Common myeloid progenitor, CD34-positive (primary cell): ENCODE measurements at regions of chr11 and their contacts with region 1.

Region 1: GRCh38 chr11:727859-728748 is 19.2 kb upstream of the TALDO1 start:
- DNase-seq: peak; percentile 79 to 81 (median 79)
- H3K4me3 ChIP-seq: no peak overlapping the region
- H3K27ac ChIP-seq: no peak overlapping the region
- H3K4me1 ChIP-seq: peaks cover 0 to 30% (median 25%) of the 10 kb centered on the region in 4 experiments
- H3K27me3 ChIP-seq: peaks cover 0 to 12% (median 4%) of the 10 kb centered on the region in 5 experiments

Region 2: DNA sequence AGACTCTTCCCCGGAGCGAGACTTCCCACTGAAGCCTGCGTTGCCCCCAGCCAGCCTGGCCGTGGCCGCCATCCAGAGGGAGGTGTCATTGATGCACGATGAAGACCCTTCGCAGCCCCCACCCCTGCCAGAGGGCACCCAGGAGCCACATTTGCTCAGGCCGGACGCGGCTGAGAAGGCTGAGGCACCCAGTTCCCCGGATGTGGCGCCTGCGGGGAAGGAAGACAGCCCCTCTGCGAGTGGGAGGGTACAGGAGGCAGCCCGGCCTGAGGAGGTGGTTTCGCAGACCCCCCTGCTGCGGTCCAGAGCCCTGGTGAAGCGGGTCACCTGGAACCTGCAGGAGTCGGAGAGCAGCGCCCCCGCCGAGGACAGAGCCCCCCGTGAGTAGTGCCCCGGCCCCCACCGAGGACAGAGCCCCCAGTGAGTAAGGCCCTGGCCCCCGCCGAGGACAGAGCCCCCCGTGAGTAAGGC is 118.7 kb before region 1 on chr11:
- CTCF ChIA-PET with region 1: no interaction called
- POLR2A ChIA-PET with region 1: no interaction called
- DNase-seq: no peak
- H3K4me3 ChIP-seq: no peak overlapping the region
- H3K27ac ChIP-seq: no peak overlapping the region
- H3K4me1 ChIP-seq: peaks cover 0 to 4% (median under 1%) of the 10 kb centered on the region in 4 experiments
- H3K27me3 ChIP-seq: no peaks in the 10 kb centered on the region

Region 3: GRCh38 chr11:662689-663274 is 65.3 kb before region 1 on chr11:
- CTCF ChIA-PET with region 1: interaction called, 19 read pairs
- POLR2A ChIA-PET with region 1: no interaction called
- DNase-seq: peak; percentile 43 to 55 (median 50)
- H3K4me3 ChIP-seq: no peak overlapping the region
- H3K27ac ChIP-seq: no peak overlapping the region
- H3K4me1 ChIP-seq: peaks cover 0 to 8% (median 0%) of the 10 kb centered on the region in 4 experiments
- H3K27me3 ChIP-seq: no peaks in the 10 kb centered on the region

Region 4: DNA sequence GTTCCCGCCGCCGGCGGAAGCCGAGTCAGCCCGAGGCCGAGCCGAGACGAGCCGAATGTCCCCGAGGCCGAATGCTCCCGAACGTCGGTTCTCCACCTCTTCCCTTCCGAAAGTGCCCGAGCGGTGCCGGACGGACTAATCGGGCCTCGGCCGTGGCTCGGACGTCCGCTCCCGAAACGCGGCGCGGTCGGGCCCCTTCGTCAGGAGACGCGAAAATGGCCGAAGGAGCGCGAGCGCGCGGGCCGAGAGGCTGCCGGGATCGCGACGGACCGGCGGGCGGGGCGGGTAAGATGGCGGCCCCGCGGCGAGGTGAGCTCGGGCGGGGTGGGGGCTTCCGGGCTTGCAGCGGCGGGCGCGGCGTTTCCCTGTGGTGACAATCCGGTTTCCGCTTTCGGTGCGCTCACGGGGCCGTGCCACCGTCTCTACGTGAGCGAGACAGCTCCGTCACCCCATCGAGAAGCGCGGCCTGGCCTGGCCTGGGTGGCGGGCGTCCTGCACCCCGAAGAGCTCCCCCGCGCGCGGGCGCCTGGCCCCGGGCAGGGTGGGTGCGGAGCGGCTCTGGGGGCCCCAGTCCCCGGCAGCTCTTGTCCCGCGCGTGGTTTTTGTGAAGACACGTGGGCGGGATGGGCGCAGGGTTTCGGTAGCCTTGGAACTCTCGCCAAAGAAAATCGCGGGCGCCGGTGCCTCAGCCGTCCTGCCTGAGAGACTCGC is 32.4 kb before region 1 on chr11 and contains the start of gene TMEM80:
- CTCF ChIA-PET with region 1: interaction called, 28 read pairs
- POLR2A ChIA-PET with region 1: no interaction called
- DNase-seq: peak; percentile 98 to 99 (median 99)
- H3K4me3 ChIP-seq: peak within 1 kb of the TSS; percentile 81 to 92 (median 85)
- H3K27ac ChIP-seq: peak within 1 kb of the TSS; percentile 98 to 99
- H3K4me1 ChIP-seq: peaks cover 0 to 55% (median 27%) of the 10 kb centered on the region in 4 experiments
- H3K27me3 ChIP-seq: no peaks in the 10 kb centered on the region

Region 5: GRCh38 chr11:706957-707816 is 20.9 kb before region 1 on chr11:
- CTCF ChIA-PET with region 1: interaction called, 16 read pairs
- POLR2A ChIA-PET with region 1: no interaction called
- DNase-seq: no peak
- H3K4me3 ChIP-seq: no peak overlapping the region
- H3K27ac ChIP-seq: no peak overlapping the region
- H3K4me1 ChIP-seq: peaks cover 0 to 22% (median 12%) of the 10 kb centered on the region in 4 experiments
- H3K27me3 ChIP-seq: peaks cover 0 to 60% (median 8%) of the 10 kb centered on the region in 5 experiments

Region 6: GRCh38 chr11:747158-748006 is 19.3 kb after region 1 on chr11 and contains the start of gene TALDO1:
- CTCF ChIA-PET with region 1: interaction called, 133 read pairs
- POLR2A ChIA-PET with region 1: interaction called, 5 read pairs
- DNase-seq: peak; percentile 86 to 93 (median 92)
- H3K4me3 ChIP-seq: peak within 1 kb of the TSS; percentile 69 to 100 (median 93)
- H3K27ac ChIP-seq: peak within 1 kb of the TSS; percentile 91 to 99
- H3K4me1 ChIP-seq: peaks cover 7 to 56% (median 42%) of the 10 kb centered on the region in 4 experiments
- H3K27me3 ChIP-seq: no peaks in the 10 kb centered on the region

Region 7: GRCh38 chr11:765025-765801 is 37.1 kb after region 1 on chr11:
- CTCF ChIA-PET with region 1: interaction called, 103 read pairs
- POLR2A ChIA-PET with region 1: no interaction called
- DNase-seq: peak; percentile 83 to 92 (median 87)
- H3K4me3 ChIP-seq: no peak overlapping the region
- H3K27ac ChIP-seq: no peak overlapping the region
- H3K4me1 ChIP-seq: no peaks in the 10 kb centered on the region
- H3K27me3 ChIP-seq: no peaks in the 10 kb centered on the region